Posterior cingulate gyrus (tissue), 11 donors: ENCODE measurements at regions of chr11 and their contacts with region 1.

Region 1: GRCh38 chr11:16605894-16606783 is 132.3 kb upstream of the C11orf58 start:
- DNase-seq: peak; percentile 80 to 97 (median 90)

Region 2: GRCh38 chr11:15327786-15328231 is 1278.3 kb before region 1 on chr11:
- intact Hi-C with region 1: loop called (anchors 5 kb)
- DNase-seq: peak; percentile 38 to 93 (median 68)

Region 3: DNA sequence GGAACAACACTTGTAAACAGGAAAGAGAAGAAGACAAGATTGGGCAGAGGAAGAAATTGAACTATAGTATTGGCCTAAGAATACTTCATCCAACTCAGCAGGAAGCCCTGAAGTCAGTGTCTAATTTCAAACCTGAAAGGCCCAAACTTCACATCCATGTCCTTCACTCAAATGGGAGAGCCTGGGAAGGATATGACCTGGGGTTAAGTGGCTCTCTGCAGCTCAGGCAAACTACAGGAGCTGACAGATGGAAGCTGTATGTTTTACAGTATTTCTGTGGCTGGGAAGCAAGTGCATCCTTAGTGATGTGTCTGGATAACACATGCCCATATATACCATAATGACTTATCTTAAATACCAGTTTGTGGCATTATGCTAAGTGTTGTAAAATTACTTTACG is 446.0 kb before region 1 on chr11:
- intact Hi-C with region 1: no loop called
- DNase-seq: no peak